Endothelial cell of umbilical vein (primary cell): ENCODE measurements at regions of chr13 and their contacts with region 1.

Region 1: DNA sequence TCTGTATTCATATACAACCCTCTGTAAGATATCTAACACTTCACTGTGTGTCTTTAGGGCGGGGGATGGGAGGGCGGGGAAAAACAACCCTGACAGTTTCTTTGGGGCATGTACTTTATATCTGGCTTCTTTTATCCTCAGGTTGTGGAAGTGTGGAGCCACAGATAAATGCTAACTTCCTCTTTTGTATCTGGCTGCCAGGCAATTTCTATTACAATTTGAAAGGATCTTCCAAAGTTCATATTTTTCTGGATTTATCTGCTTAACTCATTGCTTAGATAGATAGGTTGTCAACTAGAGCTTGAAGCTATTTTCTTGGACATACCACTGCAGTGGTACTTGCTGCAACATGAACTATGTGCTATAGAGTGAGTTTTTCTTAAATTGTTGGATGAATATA is 393.0 kb downstream of the LMO7 start:
- DNase-seq: no peak
- H3K4me3 ChIP-seq: no peak overlapping the region
- H3K27ac ChIP-seq: no peak overlapping the region
- H3K4me1 ChIP-seq: no peaks in the 10 kb centered on the region
- H3K27me3 ChIP-seq: no peaks in the 10 kb centered on the region
- CTCF ChIP-seq: no peak
- POLR2A ChIP-seq: no peak

Region 2: GRCh38 chr13:76016799-76017400 is 12.2 kb before region 1 on chr13:
- CTCF ChIA-PET with region 1: interaction called, 15 read pairs
- POLR2A ChIA-PET with region 1: no interaction called
- dilution Hi-C with region 1: no loop called
- intact Hi-C with region 1: no loop called
- DNase-seq: peak; percentile 52
- H3K4me3 ChIP-seq: no peak overlapping the region
- H3K27ac ChIP-seq: no peak overlapping the region
- H3K4me1 ChIP-seq: no peaks in the 10 kb centered on the region
- H3K27me3 ChIP-seq: peaks cover 0 to 2% of the 10 kb centered on the region in 2 experiments
- CTCF ChIP-seq: peak; percentile 44 to 53
- POLR2A ChIP-seq: no peak